Right ventricle myocardium superior (tissue), 1 donor: ENCODE measurements at regions of chr6 and their contacts with region 1.

Region 1: GRCh38 chr6:150079604-150080003 is 10.7 kb upstream of the ULBP3 start:
- DNase-seq: no peak
- ATAC-seq: no peak

Region 2: GRCh38 chr6:149696901-149697300 is 382.7 kb before region 1 on chr6:
- intact Hi-C with region 1: no loop called
- DNase-seq: no peak
- ATAC-seq: no peak

Region 3: DNA sequence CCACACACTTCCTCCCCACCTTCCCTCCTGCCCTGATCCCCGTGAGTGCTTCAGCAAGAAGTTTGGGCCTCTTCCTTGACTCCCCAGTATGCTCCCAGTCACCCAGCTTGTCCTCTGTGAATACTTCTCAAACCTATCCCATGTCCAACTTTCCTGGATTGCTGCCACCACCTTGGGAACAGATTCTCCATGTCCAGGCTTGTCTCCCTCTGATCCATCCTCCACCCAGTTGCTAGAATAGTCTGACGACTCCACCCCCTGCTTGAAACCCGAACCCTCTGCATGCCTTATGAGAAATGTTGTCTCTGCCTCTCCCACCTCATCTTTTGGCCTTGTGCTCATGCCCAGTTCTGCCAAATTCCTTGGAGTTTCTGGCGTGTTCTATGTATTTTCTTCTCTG is 171.2 kb after region 1 on chr6:
- intact Hi-C with region 1: loop called (anchors 10 kb)
- DNase-seq: no peak
- ATAC-seq: no peak

Region 4: GRCh38 chr6:150334790-150335783 is 255.5 kb after region 1 on chr6:
- intact Hi-C with region 1: loop called (anchors 5 kb)
- DNase-seq: no peak
- ATAC-seq: no peak

Region 5: DNA sequence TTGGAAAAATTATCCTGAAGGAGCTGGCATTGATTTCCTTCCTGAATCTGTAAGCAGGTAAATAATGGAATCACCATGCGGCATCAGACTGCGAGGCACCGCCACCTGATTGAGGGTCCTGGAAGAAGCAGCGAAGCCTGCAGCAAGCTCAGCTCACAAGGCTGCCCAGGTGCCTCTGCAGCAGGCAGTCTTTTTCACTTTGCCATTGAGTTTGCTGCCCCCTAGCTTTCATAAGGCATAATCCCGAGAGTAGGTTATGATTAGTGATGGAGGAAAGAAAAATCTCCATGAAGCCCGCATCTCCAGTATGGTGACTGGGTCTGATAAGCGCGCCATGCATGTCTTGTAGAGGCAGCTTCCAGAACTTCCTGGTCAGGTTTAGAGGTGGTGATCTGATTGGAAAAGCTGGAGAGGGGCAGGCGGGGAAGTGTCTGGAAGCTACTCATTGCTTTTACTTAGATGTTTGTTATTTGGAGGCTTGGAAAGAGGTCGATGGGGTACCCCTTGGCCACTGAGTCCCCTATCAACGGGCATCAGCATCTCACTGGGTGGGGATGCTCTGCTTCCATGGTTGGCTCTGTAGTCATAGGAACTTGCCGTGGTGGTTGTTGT is 315.9 kb after region 1 on chr6:
- intact Hi-C with region 1: loop called (anchors 5 kb)
- DNase-seq: no peak
- ATAC-seq: peak; percentile 79

Region 6: DNA sequence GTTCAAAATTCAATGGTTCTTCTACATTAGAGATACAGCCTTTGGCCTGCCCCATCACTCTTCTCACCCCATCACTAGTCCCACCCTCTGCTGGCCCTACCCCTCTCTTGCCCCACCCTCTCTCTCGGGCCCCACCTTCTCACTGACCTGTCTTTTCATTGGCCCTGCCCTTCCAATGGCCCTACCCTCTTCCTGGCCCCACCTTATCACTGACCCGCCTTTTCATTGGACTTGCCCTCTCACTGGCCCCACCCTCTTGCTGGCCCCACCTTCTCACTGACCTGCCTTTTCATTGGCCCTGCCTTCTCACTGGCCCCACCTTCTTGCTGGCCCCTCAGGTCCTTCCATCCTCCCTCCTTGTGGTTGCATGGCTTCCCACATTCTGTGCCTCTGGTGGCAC is 412.9 kb after region 1 on chr6:
- intact Hi-C with region 1: no loop called
- DNase-seq: no peak
- ATAC-seq: no peak